IMR-90 (cell line): ENCODE measurements at regions of chr5 and their contacts with region 1.

Region 1: GRCh38 chr5:148374692-148375360 is 8.9 kb upstream of the FBXO38 start:
- DNase-seq: peak; percentile 65
- ATAC-seq: peak; percentile 94
- H3K4me3 ChIP-seq: no peak overlapping the region
- H3K27ac ChIP-seq: no peak overlapping the region
- H3K4me1 ChIP-seq: peaks cover 2% of the 10 kb centered on the region; the same call in 1 of the 2 replicates
- H3K27me3 ChIP-seq: no peaks in the 10 kb centered on the region
- CTCF ChIP-seq: peak; percentile 69
- POLR2A ChIP-seq: no peak
- RAD21 ChIP-seq: peak; percentile 72

Region 2: GRCh38 chr5:147310059-147310704 is 1064.6 kb before region 1 on chr5:
- CTCF ChIA-PET with region 1: no interaction called
- POLR2A ChIA-PET with region 1: no interaction called
- dilution Hi-C with region 1: no loop called
- in situ Hi-C with region 1: no loop called
- intact Hi-C with region 1: no loop called
- DNase-seq: peak; percentile 6
- ATAC-seq: peak; percentile 37; the same call in 1 of the 2 replicates
- H3K4me3 ChIP-seq: no peak overlapping the region
- H3K27ac ChIP-seq: no peak overlapping the region
- H3K4me1 ChIP-seq: 0 out of 2 replicates have a peak, but pooled peaks cover 2% of the 10 kb centered on the region
- H3K27me3 ChIP-seq: no peaks in the 10 kb centered on the region
- CTCF ChIP-seq: no peak
- POLR2A ChIP-seq: no peak
- RAD21 ChIP-seq: no peak

Region 3: DNA sequence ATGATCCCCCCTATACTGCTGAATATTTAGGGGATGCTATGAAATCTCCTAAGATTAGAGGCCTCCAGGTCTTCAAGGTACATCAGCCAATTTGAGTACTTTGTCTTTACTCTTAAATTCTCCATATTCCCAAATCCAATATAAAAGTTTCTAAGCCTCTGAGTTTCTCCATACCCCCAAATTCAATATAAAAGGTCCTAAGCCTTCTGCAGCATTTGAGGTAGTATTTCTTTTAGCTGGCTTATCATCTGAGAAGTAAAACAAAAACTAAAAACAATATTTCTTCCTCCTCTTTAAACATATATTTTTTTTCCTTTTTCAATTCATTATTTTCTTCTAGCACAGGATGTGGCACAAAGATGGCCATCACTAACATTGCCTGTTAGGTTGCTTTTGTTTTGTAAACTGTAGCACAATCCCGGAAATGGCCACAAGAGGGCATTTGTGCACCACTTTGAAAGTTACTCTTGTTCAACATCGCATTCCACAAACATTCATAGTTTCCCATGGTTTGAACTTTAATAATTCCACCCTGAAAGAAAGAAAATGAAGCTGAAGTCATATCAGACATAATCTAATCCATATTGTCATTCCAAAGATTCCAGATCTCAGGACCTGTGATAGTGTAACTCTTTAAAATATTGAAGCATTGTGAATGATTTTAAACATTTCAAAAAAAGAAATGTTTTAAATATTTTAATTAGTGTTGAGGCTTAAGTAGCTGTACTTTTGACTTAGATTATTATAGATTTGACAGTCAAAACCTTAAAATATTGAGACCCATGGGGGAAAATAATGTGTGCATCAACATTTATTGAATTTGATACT is 517.3 kb before region 1 on chr5:
- CTCF ChIA-PET with region 1: no interaction called
- POLR2A ChIA-PET with region 1: no interaction called
- dilution Hi-C with region 1: no loop called
- in situ Hi-C with region 1: no loop called
- intact Hi-C with region 1: loop called (anchors 5 kb)
- DNase-seq: peak; percentile 56
- ATAC-seq: peak; percentile 78
- H3K4me3 ChIP-seq: no peak overlapping the region
- H3K27ac ChIP-seq: no peak overlapping the region
- H3K4me1 ChIP-seq: no peaks in the 10 kb centered on the region
- H3K27me3 ChIP-seq: no peaks in the 10 kb centered on the region
- CTCF ChIP-seq: peak; percentile 70
- POLR2A ChIP-seq: no peak
- RAD21 ChIP-seq: peak; percentile 57

Region 4: GRCh38 chr5:147949711-147950573 is 424.9 kb before region 1 on chr5:
- CTCF ChIA-PET with region 1: no interaction called
- POLR2A ChIA-PET with region 1: no interaction called
- dilution Hi-C with region 1: no loop called
- in situ Hi-C with region 1: no loop called
- intact Hi-C with region 1: loop called (anchors 2 kb)
- DNase-seq: peak; percentile 39
- ATAC-seq: peak; percentile 64
- H3K4me3 ChIP-seq: no peak overlapping the region
- H3K27ac ChIP-seq: no peak overlapping the region
- H3K4me1 ChIP-seq: no peaks in the 10 kb centered on the region
- H3K27me3 ChIP-seq: no peaks in the 10 kb centered on the region
- CTCF ChIP-seq: peak; percentile 63
- POLR2A ChIP-seq: no peak
- RAD21 ChIP-seq: peak; percentile 54

Region 5: GRCh38 chr5:148033146-148033545 is 341.7 kb before region 1 on chr5:
- CTCF ChIA-PET with region 1: no interaction called
- POLR2A ChIA-PET with region 1: no interaction called
- dilution Hi-C with region 1: no loop called
- in situ Hi-C with region 1: no loop called
- intact Hi-C with region 1: no loop called
- DNase-seq: no peak
- ATAC-seq: no peak
- H3K4me3 ChIP-seq: no peak overlapping the region
- H3K27ac ChIP-seq: no peak overlapping the region
- H3K4me1 ChIP-seq: no peaks in the 10 kb centered on the region
- H3K27me3 ChIP-seq: no peaks in the 10 kb centered on the region
- CTCF ChIP-seq: no peak
- POLR2A ChIP-seq: no peak
- RAD21 ChIP-seq: no peak

Region 6: DNA sequence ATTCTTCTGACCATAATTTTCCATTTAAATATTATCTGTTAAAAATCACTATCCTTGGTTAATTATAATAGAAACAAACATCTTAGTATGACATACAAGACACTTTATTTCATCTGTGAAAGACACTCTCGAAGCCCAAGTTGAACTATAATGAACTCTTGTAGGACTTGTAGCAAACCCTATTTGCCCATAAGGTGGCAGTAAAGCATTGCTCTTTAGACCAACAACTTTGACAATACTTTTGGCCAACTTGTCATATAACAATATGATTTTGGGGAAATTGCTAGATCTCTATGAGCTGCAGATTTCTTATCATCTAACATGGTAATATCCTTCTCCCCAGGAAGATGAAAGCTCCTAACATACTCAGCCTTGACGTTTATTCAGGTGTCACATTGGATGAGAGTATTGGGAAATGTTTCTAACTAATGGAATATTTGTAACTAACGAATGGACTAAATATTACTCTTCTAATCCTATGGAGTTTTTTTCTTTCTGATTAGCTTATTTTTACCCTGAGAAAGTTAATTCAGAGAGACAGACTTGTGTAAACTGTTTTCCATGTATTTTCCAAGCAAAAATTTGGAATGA is 195.5 kb before region 1 on chr5:
- CTCF ChIA-PET with region 1: interaction called, 3 read pairs
- POLR2A ChIA-PET with region 1: no interaction called
- dilution Hi-C with region 1: no loop called
- in situ Hi-C with region 1: loop called (anchors 10 kb)
- intact Hi-C with region 1: loop called (anchors 1 kb)
- DNase-seq: peak; percentile 63
- ATAC-seq: peak; percentile 72
- H3K4me3 ChIP-seq: no peak overlapping the region
- H3K27ac ChIP-seq: no peak overlapping the region
- H3K4me1 ChIP-seq: no peaks in the 10 kb centered on the region
- H3K27me3 ChIP-seq: no peaks in the 10 kb centered on the region
- CTCF ChIP-seq: peak; percentile 65
- POLR2A ChIP-seq: no peak
- RAD21 ChIP-seq: peak; percentile 78

Region 7: GRCh38 chr5:148248894-148249293 is 125.9 kb before region 1 on chr5:
- CTCF ChIA-PET with region 1: no interaction called
- POLR2A ChIA-PET with region 1: no interaction called
- dilution Hi-C with region 1: no loop called
- in situ Hi-C with region 1: no loop called
- intact Hi-C with region 1: no loop called
- DNase-seq: no peak
- ATAC-seq: no peak
- H3K4me3 ChIP-seq: no peak overlapping the region
- H3K27ac ChIP-seq: no peak overlapping the region
- H3K4me1 ChIP-seq: no peaks in the 10 kb centered on the region
- H3K27me3 ChIP-seq: no peaks in the 10 kb centered on the region
- CTCF ChIP-seq: no peak
- POLR2A ChIP-seq: no peak
- RAD21 ChIP-seq: no peak

Region 8: DNA sequence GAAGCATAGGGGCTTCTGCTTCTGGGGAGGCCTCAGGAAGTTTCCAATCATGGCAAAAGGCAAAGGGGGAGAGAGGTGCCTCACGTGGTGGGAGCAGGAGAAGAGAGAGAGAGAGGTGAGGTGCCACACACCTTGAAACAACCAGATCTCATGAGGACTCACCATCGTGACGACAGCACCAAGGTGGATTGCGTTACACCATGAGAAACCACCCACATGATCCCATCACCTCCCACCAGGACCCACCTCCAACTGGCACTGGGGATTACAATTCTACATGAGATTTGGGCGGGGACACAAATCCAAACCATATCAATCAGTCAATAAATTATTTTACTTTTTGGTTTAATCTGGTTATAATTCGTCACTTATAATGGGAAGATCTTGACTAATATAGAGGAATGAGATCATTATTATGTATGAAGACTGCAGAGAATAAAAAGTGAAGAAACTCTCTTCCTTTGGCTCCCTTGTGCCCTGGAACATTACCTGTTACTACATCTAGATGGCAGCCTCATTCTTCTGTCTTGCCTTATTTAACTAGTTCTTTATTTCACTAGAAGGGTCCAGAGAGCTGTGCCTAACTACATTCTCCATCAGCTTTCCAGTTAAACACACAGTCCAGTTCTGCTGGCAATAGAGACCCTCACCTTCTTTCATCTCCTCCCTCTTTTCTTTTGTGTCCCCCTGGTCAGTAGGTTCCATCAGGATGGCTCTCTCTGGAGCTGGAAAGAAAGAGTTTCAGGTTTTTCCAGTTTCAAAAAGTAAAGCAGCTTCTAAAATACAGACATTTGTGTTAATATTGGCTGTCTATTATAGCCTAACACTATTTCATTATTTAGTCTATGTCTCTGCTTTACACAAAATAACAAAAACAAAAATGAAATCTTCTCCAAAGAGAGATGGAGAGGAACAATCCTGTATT is 84.3 kb before region 1 on chr5:
- CTCF ChIA-PET with region 1: interaction called, 5 read pairs
- POLR2A ChIA-PET with region 1: no interaction called
- dilution Hi-C with region 1: no loop called
- in situ Hi-C with region 1: no loop called
- intact Hi-C with region 1: loop called (anchors 2 kb)
- DNase-seq: peak; percentile 19
- ATAC-seq: peak; percentile 54
- H3K4me3 ChIP-seq: no peak overlapping the region
- H3K27ac ChIP-seq: no peak overlapping the region
- H3K4me1 ChIP-seq: no peaks in the 10 kb centered on the region
- H3K27me3 ChIP-seq: no peaks in the 10 kb centered on the region
- CTCF ChIP-seq: peak; percentile 50
- POLR2A ChIP-seq: no peak
- RAD21 ChIP-seq: peak; percentile 52